ENCODE measurements at regions of chr14 and their contacts with region 1.

Region 1: DNA sequence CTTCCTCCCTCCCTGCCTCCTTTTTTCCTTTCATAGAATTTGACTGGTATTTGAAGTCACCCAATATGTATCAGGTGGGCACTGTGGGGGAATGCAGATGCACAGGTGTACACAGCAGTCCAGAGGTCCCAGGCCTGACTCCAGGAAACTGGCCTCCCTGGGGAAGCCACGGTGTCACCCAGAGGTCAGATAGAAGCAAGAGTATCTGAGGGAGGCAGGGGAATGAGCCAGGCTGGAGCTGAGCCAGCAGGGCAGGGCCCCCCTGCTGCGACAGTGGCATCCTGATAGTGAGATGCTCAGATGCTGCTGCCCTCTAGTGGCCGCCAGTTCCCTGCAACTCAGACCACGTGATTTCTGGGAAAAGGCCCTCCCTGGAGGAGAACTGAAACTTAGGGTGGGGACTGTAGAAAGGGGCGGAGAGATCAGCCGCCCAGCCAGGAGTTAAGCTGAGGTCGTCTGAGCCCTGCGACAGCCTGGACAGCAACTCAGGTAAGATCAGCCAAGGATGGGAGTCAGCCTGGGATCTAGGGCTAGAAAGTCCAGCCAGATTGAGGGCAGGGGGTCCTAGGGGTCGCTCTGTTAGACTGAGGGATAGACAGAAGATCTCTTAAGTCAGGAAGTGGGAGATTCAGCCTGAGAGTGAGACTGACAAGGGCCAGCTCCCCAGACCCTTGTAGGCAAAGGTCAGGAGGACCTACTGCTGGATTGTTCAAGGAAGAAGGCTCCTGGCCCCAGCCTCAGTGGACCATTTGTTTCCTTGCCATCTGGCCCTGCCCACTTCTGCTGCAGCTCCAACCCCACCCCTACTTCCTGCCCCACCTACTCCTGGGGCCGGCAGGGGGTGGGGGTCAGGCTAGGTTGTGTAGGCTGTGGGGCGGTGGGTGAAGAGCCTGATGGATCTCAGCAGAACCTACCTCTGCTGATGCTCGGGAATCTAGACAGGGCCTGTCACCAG is at the start of gene IRF9:
- DNase-seq: peak; percentile 99
- ATAC-seq: peak; percentile 97
- H3K4me3 Mint-ChIP-seq: peak within 1 kb of the TSS; percentile 70
- H3K27ac Mint-ChIP-seq: peak within 1 kb of the TSS; percentile 90
- H3K4me1 Mint-ChIP-seq: peaks cover 13% of the 10 kb centered on the region
- H3K27me3 Mint-ChIP-seq: no peaks in the 10 kb centered on the region
- CTCF ChIP-seq: peak; percentile 91
- total RNA-seq, gene IRF9: 15.6 to 16.2 TPM (median 15.7 TPM) in 3 replicates

Region 2: DNA sequence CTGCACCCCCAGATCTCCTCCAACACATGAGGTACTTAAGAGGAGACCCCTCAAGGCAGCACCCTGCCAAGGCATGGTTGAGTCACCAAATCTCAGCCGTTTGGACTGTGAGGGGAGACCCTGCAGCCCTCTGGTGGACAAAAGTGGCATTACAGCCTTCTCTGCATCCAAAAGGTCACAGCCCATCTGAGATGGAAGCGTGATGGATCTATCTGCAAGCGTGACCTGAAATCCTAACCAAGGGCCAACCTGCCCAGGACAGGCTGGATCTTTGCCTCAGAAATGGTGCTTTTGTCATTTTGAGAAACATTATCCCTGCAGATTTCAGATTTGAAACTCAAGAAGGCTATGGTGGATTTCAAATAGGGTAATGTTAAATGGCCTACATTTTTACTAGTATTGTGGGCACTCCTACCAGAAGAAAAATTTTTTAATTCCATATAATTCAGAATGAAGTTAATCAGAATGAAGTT is 231.3 kb before region 1 on chr14:
- CTCF ChIA-PET with region 1: no interaction called
- POLR2A ChIA-PET with region 1: no interaction called
- DNase-seq: peak; percentile 91
- ATAC-seq: peak; percentile 96
- H3K4me3 Mint-ChIP-seq: no peak overlapping the region
- H3K27ac Mint-ChIP-seq: no peak overlapping the region
- H3K4me1 Mint-ChIP-seq: no peaks in the 10 kb centered on the region; the same call in 1 of the 2 replicates
- H3K27me3 Mint-ChIP-seq: peaks cover 6% of the 10 kb centered on the region
- CTCF ChIP-seq: peak; percentile 98

Region 3: DNA sequence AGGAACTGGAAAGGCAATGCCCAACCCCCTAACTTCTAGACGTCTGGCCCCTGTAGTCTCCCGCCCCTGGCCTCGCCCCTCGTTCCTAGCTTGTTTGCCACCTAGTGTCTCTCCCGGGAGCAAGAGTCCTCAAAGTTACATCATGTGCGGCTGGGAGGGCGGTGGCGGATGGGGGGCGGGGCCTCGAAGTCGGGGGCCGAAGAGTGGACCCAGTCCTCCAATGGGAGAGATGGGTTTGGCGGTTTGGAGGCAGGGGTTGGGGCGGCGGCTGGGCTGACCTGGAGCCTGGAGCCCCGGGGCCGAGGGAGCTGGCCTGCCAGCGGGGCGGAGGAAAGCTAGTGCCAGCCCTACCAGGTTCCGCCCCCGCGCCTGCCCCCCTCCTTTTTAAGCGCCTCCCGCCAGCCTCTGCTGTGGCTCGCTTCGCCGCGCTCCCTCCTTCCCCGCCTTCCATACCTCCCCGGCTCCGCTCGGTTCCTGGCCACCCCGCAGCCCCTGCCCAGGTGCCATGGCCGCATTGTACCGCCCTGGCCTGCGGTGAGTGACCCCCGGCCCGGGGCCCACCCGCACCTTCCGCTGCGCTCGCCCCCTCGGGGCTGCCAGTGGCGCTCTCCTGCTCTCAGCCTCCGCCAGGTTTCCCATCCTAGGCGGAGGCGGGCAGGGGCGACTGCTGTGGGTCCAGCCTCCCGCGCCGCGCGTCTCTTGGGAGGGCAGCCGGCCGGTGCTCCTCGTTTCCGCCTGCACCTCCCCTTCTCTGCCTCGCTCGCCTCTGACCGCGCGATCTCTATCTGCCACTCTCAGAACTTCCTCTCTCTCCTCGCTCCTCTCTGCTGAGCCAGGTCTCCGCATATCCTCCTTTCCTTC is 67.0 kb before region 1 on chr14 and contains the start of gene PCK2:
- CTCF ChIA-PET with region 1: interaction called, 16 read pairs
- POLR2A ChIA-PET with region 1: interaction called, 5 read pairs
- DNase-seq: peak; percentile 98
- ATAC-seq: peak; percentile 93
- H3K4me3 Mint-ChIP-seq: peak within 1 kb of the TSS; percentile 98
- H3K27ac Mint-ChIP-seq: peak within 1 kb of the TSS; percentile 98
- H3K4me1 Mint-ChIP-seq: peaks cover 32% of the 10 kb centered on the region
- H3K27me3 Mint-ChIP-seq: peaks cover 10% of the 10 kb centered on the region
- CTCF ChIP-seq: no peak
- total RNA-seq, gene PCK2: 51.2 to 67.0 TPM (median 59.2 TPM) in 3 replicates

Region 4: GRCh38 chr14:24135834-24136542 is 25.1 kb before region 1 on chr14 and contains the start of gene PSME1:
- CTCF ChIA-PET with region 1: interaction called, 31 read pairs
- POLR2A ChIA-PET with region 1: interaction called, 4 read pairs
- DNase-seq: peak; percentile 93
- ATAC-seq: peak; percentile 92
- H3K4me3 Mint-ChIP-seq: peak within 1 kb of the TSS; percentile 86
- H3K27ac Mint-ChIP-seq: peak within 1 kb of the TSS; percentile 88
- H3K4me1 Mint-ChIP-seq: peaks cover 33% of the 10 kb centered on the region
- H3K27me3 Mint-ChIP-seq: no peaks in the 10 kb centered on the region; the same call in 1 of the 2 replicates
- CTCF ChIP-seq: no peak
- total RNA-seq, gene PSME1: 76.8 to 99.1 TPM (median 98.8 TPM) in 3 replicates

Region 5: GRCh38 chr14:24171422-24172260 is 10.5 kb after region 1 on chr14 and contains the start of gene REC8:
- CTCF ChIA-PET with region 1: interaction called, 18 read pairs
- POLR2A ChIA-PET with region 1: interaction called, 4 read pairs
- DNase-seq: peak; percentile 99
- ATAC-seq: peak; percentile 94
- H3K4me3 Mint-ChIP-seq: peak within 1 kb of the TSS; percentile 79
- H3K27ac Mint-ChIP-seq: peak within 1 kb of the TSS; percentile 78
- H3K4me1 Mint-ChIP-seq: peaks cover 9% of the 10 kb centered on the region
- H3K27me3 Mint-ChIP-seq: no peaks in the 10 kb centered on the region; the same call in none of the 2 replicates
- CTCF ChIP-seq: no peak
- total RNA-seq, gene REC8: 29.6 to 32.2 TPM (median 31.5 TPM) in 3 replicates

Region 6: DNA sequence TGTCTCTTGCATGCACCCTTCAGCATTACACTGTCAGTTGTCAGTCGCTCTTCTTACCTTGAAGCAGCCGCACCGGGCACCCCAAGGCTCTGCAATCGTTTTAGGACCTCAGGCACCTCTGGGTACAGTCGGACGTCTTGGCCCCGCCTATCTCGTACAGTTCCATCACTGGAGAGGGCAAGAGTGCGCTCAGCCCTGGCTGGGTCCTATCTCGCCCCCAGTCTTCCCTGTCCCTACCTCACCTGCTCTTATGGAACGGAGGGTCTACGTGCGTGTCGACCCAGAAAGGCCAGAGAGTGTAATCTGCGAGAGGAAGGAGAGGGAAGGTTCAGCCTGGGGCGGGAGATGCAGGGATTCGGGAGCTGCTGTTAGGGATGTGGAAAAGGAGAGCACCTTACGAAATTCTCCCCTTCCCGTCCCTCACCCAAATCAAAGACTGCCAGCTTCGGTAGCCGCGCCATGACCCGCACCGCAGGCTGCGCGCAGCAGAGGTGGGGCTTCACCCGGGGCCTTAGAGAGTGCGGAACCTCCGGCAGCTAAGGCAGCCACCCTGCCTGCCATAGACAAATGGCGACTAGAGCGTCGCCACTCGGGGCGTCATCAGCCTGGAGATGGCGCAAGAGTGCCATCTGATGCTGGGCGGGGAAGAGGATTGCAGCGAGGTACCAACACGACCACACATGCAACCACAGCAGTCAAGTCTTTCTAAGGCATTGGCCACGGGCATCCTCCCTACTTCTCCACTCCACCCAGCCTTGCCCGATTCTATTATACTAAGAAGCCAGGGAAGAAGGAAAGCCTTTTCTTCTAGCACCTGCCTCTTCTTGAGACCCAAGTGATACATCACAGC is 54.6 kb after region 1 on chr14 and contains the start of gene MDP1:
- CTCF ChIA-PET with region 1: interaction called, 15 read pairs
- POLR2A ChIA-PET with region 1: interaction called, 5 read pairs
- DNase-seq: peak; percentile 85
- ATAC-seq: peak; percentile 71
- H3K4me3 Mint-ChIP-seq: peak within 1 kb of the TSS; percentile 96
- H3K27ac Mint-ChIP-seq: peak within 1 kb of the TSS; percentile 97
- H3K4me1 Mint-ChIP-seq: peaks cover 23% of the 10 kb centered on the region
- H3K27me3 Mint-ChIP-seq: no peaks in the 10 kb centered on the region; the same call in 1 of the 2 replicates
- CTCF ChIP-seq: no peak
- total RNA-seq, gene MDP1: 12.6 to 18.4 TPM (median 16.9 TPM) in 3 replicates

Region 7: DNA sequence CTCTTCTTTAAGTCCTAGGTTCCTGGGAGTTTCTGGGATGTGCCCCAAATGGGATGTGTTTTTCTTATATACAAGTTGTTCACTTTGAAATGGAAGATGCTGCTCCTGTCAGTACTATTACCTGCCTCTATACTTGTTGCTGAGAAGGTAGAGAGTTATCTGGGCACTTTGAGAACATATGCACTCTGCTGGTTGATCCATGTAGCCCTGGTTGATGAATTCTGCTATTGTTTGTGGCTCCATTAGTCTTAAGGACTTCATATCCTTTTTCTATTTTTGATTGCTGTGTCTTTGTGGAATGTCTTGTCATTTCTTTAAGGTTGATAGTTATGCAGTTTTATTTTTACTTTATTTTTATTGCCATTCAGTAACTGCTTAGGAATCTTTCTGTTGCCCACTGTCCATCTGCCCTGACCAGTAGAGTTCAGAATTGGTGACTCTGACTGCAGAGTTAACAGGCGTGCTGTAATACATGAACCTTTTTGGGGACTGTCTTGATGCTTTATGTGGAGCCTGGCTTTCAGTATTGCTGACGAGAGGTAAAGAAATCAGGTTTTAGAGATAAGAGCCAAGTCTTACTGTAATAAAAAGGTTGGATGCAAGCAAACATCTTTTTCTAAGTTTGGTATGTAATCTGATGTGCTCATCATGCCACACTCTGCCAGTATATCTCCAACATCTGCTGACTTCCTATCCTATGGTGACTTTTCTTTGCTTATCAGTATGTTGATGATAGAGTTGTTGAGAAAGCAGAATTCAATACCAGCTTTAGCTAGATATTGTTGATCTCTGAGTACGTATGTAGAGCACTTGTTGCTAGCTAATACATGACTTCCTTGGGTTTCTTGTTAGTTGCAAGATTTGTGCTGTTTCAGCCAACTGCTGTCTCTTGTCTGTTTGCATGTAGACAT is 73.2 kb after region 1 on chr14:
- CTCF ChIA-PET with region 1: no interaction called
- POLR2A ChIA-PET with region 1: no interaction called
- DNase-seq: no peak
- ATAC-seq: no peak
- H3K4me3 Mint-ChIP-seq: peak overlapping the region; percentile 32
- H3K27ac Mint-ChIP-seq: no peak overlapping the region
- H3K4me1 Mint-ChIP-seq: peaks cover 22% of the 10 kb centered on the region
- H3K27me3 Mint-ChIP-seq: no peaks in the 10 kb centered on the region
- CTCF ChIP-seq: no peak